Ascending aorta (tissue), 2 donors: ENCODE measurements at regions of chr2 and their contacts with region 1.

Region 1: GRCh38 chr2:217277646-217278398 is 418.0 kb upstream of the TNP1 start:
- DNase-seq: peak in 1 of 2 donors; percentile 68
- H3K4me3 ChIP-seq: no peak overlapping the region
- H3K27ac ChIP-seq: peak overlapping the region in 1 of 2 donors; percentile 64
- H3K4me1 ChIP-seq: peaks cover 0 to 11% of the 10 kb centered on the region in 2 donors
- H3K27me3 ChIP-seq: no peaks in the 10 kb centered on the region
- CTCF ChIP-seq: no peak

Region 2: GRCh38 chr2:217027414-217027813 is 250.4 kb before region 1 on chr2:
- intact Hi-C with region 1: no loop called
- DNase-seq: no peak
- H3K4me3 ChIP-seq: no peak overlapping the region
- H3K27ac ChIP-seq: no peak overlapping the region
- H3K4me1 ChIP-seq: no peaks in the 10 kb centered on the region
- H3K27me3 ChIP-seq: no peaks in the 10 kb centered on the region
- CTCF ChIP-seq: no peak

Region 3: GRCh38 chr2:217151509-217152206 is 126.2 kb before region 1 on chr2:
- intact Hi-C with region 1: no loop called
- DNase-seq: no peak
- H3K4me3 ChIP-seq: no peak overlapping the region
- H3K27ac ChIP-seq: no peak overlapping the region
- H3K4me1 ChIP-seq: no peaks in the 10 kb centered on the region
- H3K27me3 ChIP-seq: no peaks in the 10 kb centered on the region
- CTCF ChIP-seq: no peak

Region 4: DNA sequence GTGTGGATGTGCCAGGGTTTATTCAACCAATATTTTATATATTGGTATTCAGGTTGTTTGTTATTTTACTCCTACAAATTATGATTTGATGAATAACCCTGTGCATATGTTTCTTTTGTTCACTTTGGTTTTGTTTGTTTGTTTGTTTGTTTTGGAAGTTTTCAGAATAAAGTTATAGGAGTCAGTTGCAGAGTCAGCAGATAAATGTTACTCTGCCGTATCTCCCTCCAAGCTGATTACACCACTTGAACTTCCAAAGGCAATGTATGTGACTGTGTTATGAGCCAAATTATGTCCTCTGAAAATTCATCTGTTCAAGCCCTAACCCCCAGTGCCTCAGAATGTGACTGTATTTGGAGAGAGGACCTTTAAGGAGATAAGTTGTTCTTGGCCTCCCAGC is 227.5 kb after region 1 on chr2:
- intact Hi-C with region 1: loop called (anchors 5 kb)
- DNase-seq: no peak
- H3K4me3 ChIP-seq: no peak overlapping the region
- H3K27ac ChIP-seq: no peak overlapping the region
- H3K4me1 ChIP-seq: no peaks in the 10 kb centered on the region
- H3K27me3 ChIP-seq: no peaks in the 10 kb centered on the region
- CTCF ChIP-seq: no peak

Region 5: GRCh38 chr2:217953531-217953932 is 675.7 kb after region 1 on chr2:
- intact Hi-C with region 1: no loop called
- DNase-seq: peak in 1 of 2 donors; percentile 82
- H3K4me3 ChIP-seq: peak overlapping the region in 1 of 2 donors; percentile 26
- H3K27ac ChIP-seq: peak overlapping the region; percentile 92 to 94
- H3K4me1 ChIP-seq: peaks cover 35 to 80% of the 10 kb centered on the region in 2 donors
- H3K27me3 ChIP-seq: no peaks in the 10 kb centered on the region
- CTCF ChIP-seq: peak; percentile 12 to 32 (median 22)